ENCODE measurements at regions of chr9 and their contacts with region 1.

Region 1: DNA sequence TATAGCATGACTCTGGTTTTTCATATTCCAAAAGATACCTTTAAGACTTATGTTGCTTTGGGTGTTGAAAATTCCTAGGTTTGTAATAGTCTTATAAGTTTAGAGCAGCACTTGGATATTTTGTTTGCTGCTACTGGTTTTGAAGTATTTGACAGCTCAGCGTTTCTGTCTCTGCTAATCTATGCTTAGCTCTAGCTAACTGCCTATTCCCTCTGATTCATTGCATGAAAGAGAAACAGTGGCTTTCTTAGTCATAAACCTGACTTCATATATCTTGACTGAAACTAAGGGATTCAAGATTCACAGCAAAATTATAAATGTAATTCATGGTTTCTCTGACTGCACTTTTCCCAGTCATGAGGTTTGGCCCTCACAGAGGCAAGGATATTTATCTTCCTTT is 35.6 kb upstream of the ANXA1 start:
- DNase-seq: no peak

Region 2: GRCh38 chr9:72193478-72193881 is 922.6 kb before region 1 on chr9:
- intact Hi-C with region 1: loop called in 1 of 2 experiments (anchors 10 kb)
- DNase-seq: no peak

Region 3: GRCh38 chr9:73183917-73184861 is 68.2 kb after region 1 on chr9:
- intact Hi-C with region 1: no loop called
- DNase-seq: no peak

Measured in posterior vena cava (tissue), 2 donors.